ENCODE measurements at regions of chr1 and their contacts with region 1.

Region 1: GRCh38 chr1:43934101-43934985 is 742 bp downstream of the ARTN start:
- DNase-seq: peak; percentile 72
- H3K4me3 Mint-ChIP-seq: no peak overlapping the region
- H3K27ac Mint-ChIP-seq: no peak overlapping the region
- H3K4me1 Mint-ChIP-seq: peaks cover 17% of the 10 kb centered on the region
- H3K27me3 Mint-ChIP-seq: peaks cover 28% of the 10 kb centered on the region

Region 2: GRCh38 chr1:43529206-43529731 is 405.1 kb before region 1 on chr1:
- CTCF ChIA-PET with region 1: interaction called, 31 read pairs
- POLR2A ChIA-PET with region 1: no interaction called
- intact Hi-C with region 1: loop called (anchors 1 kb)
- DNase-seq: peak; percentile 87
- H3K4me3 Mint-ChIP-seq: no peak overlapping the region
- H3K27ac Mint-ChIP-seq: no peak overlapping the region
- H3K4me1 Mint-ChIP-seq: peaks cover 16% of the 10 kb centered on the region
- H3K27me3 Mint-ChIP-seq: peaks cover 37% of the 10 kb centered on the region

Region 3: GRCh38 chr1:43763497-43763973 is 170.8 kb before region 1 on chr1:
- CTCF ChIA-PET with region 1: interaction called, 312 read pairs
- POLR2A ChIA-PET with region 1: interaction called, 5 read pairs
- intact Hi-C with region 1: loop called (anchors 1 kb)
- DNase-seq: peak; percentile 53
- H3K4me3 Mint-ChIP-seq: no peak overlapping the region
- H3K27ac Mint-ChIP-seq: no peak overlapping the region
- H3K4me1 Mint-ChIP-seq: no peaks in the 10 kb centered on the region
- H3K27me3 Mint-ChIP-seq: no peaks in the 10 kb centered on the region

Region 4: GRCh38 chr1:43849670-43850069 is 84.7 kb before region 1 on chr1:
- CTCF ChIA-PET with region 1: interaction called, 15 read pairs
- POLR2A ChIA-PET with region 1: no interaction called
- intact Hi-C with region 1: no loop called
- DNase-seq: no peak
- H3K4me3 Mint-ChIP-seq: no peak overlapping the region
- H3K27ac Mint-ChIP-seq: no peak overlapping the region
- H3K4me1 Mint-ChIP-seq: peaks cover 7% of the 10 kb centered on the region
- H3K27me3 Mint-ChIP-seq: no peaks in the 10 kb centered on the region

Region 5: DNA sequence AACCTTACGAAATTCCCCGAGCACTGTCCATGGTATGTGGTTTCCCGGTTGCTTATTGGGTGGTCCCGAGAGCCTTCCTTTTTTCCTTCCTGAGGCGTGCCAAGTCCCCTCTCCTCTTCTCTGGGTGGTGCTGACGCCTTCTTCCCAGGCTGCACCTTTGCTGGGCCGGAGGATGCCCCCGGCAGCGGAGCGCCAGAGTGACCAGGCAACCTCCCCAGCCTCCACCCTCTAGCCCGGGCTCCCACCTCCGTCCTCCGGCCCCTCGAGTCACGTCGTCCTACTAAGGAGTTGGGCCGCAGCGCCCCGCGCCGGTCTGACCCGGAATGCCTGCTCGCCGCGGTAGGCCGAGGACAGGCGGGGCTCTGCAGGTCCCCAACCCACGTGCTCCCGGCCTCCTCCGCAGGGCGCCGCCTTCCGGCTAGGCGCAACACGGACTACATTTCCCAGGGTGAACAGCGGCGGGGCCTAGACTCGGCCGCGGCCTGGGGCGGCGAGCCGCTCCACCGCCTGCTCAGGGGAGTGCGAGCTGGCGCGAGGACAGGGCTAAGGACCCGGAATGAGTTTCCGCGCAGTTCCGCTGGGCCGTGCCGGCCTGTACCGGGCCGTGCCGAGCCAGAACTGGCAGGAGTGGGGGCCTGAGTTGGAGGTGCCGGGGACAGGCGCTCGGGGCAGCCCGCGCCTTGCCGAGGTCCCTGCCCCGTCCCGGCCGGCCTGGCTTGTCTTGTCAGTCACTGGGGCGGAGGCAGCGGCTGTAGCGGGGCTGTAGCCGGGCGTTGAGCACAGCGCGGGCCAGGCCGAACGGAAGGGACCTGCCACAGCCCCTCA is 12.1 kb after region 1 on chr1 and contains the start of gene IPO13:
- CTCF ChIA-PET with region 1: interaction called, 122 read pairs
- POLR2A ChIA-PET with region 1: interaction called, 11 read pairs
- intact Hi-C with region 1: no loop called
- DNase-seq: peak; percentile 98
- H3K4me3 Mint-ChIP-seq: peak within 1 kb of the TSS; percentile 88
- H3K27ac Mint-ChIP-seq: peak within 1 kb of the TSS; percentile 87
- H3K4me1 Mint-ChIP-seq: peaks cover 41% of the 10 kb centered on the region
- H3K27me3 Mint-ChIP-seq: no peaks in the 10 kb centered on the region
- total RNA-seq, gene IPO13: 13.3 TPM

Region 6: GRCh38 chr1:43974443-43975248 is 40.3 kb after region 1 on chr1 and contains the start of gene ATP6V0B:
- CTCF ChIA-PET with region 1: interaction called, 15 read pairs
- POLR2A ChIA-PET with region 1: interaction called, 7 read pairs
- intact Hi-C with region 1: no loop called
- DNase-seq: peak; percentile 98
- H3K4me3 Mint-ChIP-seq: peak within 1 kb of the TSS; percentile 83
- H3K27ac Mint-ChIP-seq: peak within 1 kb of the TSS; percentile 89
- H3K4me1 Mint-ChIP-seq: peaks cover 57% of the 10 kb centered on the region
- H3K27me3 Mint-ChIP-seq: no peaks in the 10 kb centered on the region
- total RNA-seq, gene ATP6V0B: 84.8 to 85.1 TPM

Region 7: DNA sequence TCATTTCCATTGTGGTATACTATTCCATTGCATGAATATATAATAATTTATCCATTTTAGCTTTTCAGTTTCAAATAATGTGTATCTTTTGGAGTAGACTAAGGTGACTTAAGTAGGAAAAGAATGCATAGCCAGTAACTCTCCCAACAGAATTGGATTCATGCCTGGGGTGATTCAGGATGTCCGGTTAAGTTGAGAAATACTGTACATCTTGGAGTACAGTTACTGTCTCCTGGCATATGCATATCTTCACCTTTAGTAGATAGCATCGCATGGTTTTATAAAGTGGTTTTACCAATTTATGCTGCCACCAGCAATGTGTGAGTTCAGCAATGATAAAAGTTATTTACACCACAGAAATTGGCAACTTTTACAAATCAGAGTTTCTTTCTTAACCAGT is 115.5 kb after region 1 on chr1:
- CTCF ChIA-PET with region 1: interaction called, 20 read pairs
- POLR2A ChIA-PET with region 1: no interaction called
- intact Hi-C with region 1: no loop called
- DNase-seq: no peak
- H3K4me3 Mint-ChIP-seq: no peak overlapping the region
- H3K27ac Mint-ChIP-seq: no peak overlapping the region
- H3K4me1 Mint-ChIP-seq: peaks cover 18% of the 10 kb centered on the region
- H3K27me3 Mint-ChIP-seq: peaks cover 3% of the 10 kb centered on the region

Measured in activated CD4-positive, alpha-beta memory T cell treated with anti-CD3 and anti-CD28 coated beads for 36 hours (primary cell).